Activated CD4-positive, alpha-beta T cell treated with anti-CD3 and anti-CD28 coated beads for 36 hours (primary cell): ENCODE measurements at regions of chr6 and their contacts with region 1.

Region 1: GRCh38 chr6:100084291-100084953 is 90.4 kb upstream of the MCHR2 start:
- DNase-seq: no peak
- ATAC-seq: no peak
- H3K4me3 Mint-ChIP-seq: no peak overlapping the region
- H3K27ac Mint-ChIP-seq: no peak overlapping the region
- H3K4me1 Mint-ChIP-seq: no peaks in the 10 kb centered on the region
- H3K27me3 Mint-ChIP-seq: no peaks in the 10 kb centered on the region

Region 2: GRCh38 chr6:100008857-100009256 is 75.6 kb before region 1 on chr6:
- CTCF ChIA-PET with region 1: interaction called, 3 read pairs
- POLR2A ChIA-PET with region 1: no interaction called
- intact Hi-C with region 1: loop called in 1 of 2 experiments (anchors 5 kb)
- DNase-seq: no peak
- ATAC-seq: no peak
- H3K4me3 Mint-ChIP-seq: no peak overlapping the region
- H3K27ac Mint-ChIP-seq: no peak overlapping the region
- H3K4me1 Mint-ChIP-seq: no peaks in the 10 kb centered on the region
- H3K27me3 Mint-ChIP-seq: peaks cover 15% of the 10 kb centered on the region